ENCODE measurements at regions of chr2 and their contacts with region 1.

Region 1: GRCh38 chr2:85132834-85133637 is at the start of gene TCF7L1:
- DNase-seq: peak; percentile 65 to 90 (median 84)
- ATAC-seq: peak; percentile 97
- H3K4me3 ChIP-seq: peak within 1 kb of the TSS; percentile 40
- H3K27ac ChIP-seq: no peak within 1 kb of the TSS
- H3K4me1 ChIP-seq: peaks cover 0 to 18% of the 10 kb centered on the region in 2 experiments; a peak in 2 of 5 replicates
- H3K27me3 ChIP-seq: peaks cover 18 to 47% of the 10 kb centered on the region in 2 experiments
- CTCF ChIP-seq: peak; percentile 48 to 74 (median 51)
- EP300 ChIP-seq: no peak
- POLR2A ChIP-seq: no peak
- RAD21 ChIP-seq: peak in 1 of 2 experiments; percentile 49; a peak in 2 of 4 replicates
- polyA plus RNA-seq, gene TCF7L1: 0.04 TPM in 1 of 2 experiments, not detected in the other

Region 2: GRCh38 chr2:85243101-85244072 is 110.4 kb after region 1 on chr2:
- CTCF ChIA-PET with region 1: no interaction called
- POLR2A ChIA-PET with region 1: no interaction called
- in situ Hi-C with region 1: no loop called
- intact Hi-C with region 1: loop called (anchors 2 kb)
- DNase-seq: peak; percentile 70 to 76 (median 74)
- ATAC-seq: peak; percentile 96
- H3K4me3 ChIP-seq: no peak overlapping the region
- H3K27ac ChIP-seq: no peak overlapping the region
- H3K4me1 ChIP-seq: no peaks in the 10 kb centered on the region
- H3K27me3 ChIP-seq: peaks cover 39 to 69% of the 10 kb centered on the region in 2 experiments
- CTCF ChIP-seq: peak; percentile 68 to 77 (median 73)
- EP300 ChIP-seq: no peak
- POLR2A ChIP-seq: no peak
- RAD21 ChIP-seq: peak; percentile 13 to 58; a peak in 2 of 4 replicates

Region 3: DNA sequence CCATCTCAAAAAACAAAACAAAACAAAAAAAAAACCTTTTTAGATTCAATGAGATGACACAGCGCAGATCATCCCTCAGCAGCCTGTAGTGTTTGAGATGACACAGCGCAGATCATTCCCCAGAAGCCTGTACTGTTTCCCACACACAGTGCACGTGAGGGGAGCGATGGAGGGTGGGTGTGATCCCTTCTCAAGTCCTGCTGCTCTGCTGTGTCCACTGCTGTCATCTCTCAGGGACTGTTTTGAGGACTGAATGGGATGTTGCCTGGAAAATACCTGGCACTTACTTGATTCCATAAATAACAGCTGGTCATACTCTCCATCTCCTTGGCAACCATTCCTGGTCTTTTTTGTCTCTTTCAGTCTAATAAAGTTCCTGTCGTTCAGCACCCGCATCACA is 169.1 kb after region 1 on chr2:
- CTCF ChIA-PET with region 1: no interaction called
- POLR2A ChIA-PET with region 1: no interaction called
- in situ Hi-C with region 1: no loop called
- intact Hi-C with region 1: loop called (anchors 2 kb)
- DNase-seq: no peak
- ATAC-seq: peak; percentile 13; the same call in 1 of the 3 replicates
- H3K4me3 ChIP-seq: no peak overlapping the region
- H3K27ac ChIP-seq: no peak overlapping the region
- H3K4me1 ChIP-seq: peaks cover 3 to 20% of the 10 kb centered on the region in 2 experiments; a peak in 3 of 5 replicates
- H3K27me3 ChIP-seq: peaks cover 27 to 53% of the 10 kb centered on the region in 2 experiments; a peak in 4 of 5 replicates
- CTCF ChIP-seq: no peak
- EP300 ChIP-seq: no peak
- POLR2A ChIP-seq: no peak
- RAD21 ChIP-seq: no peak

Measured in K562 (cell line).